ENCODE measurements at regions of chr14 and their contacts with region 1.

Region 1: GRCh38 chr14:61468063-61468825 is 146.9 kb downstream of the PRKCH start:
- DNase-seq: no peak
- ATAC-seq: no peak
- H3K4me3 ChIP-seq: no peak overlapping the region
- H3K4me3 Mint-ChIP-seq: no peak overlapping the region
- H3K27ac ChIP-seq: no peak overlapping the region
- H3K27ac Mint-ChIP-seq: no peak overlapping the region
- H3K4me1 ChIP-seq: peaks cover 25 to 30% of the 10 kb centered on the region in 2 donors
- H3K4me1 Mint-ChIP-seq: peaks cover 44% of the 10 kb centered on the region
- H3K27me3 ChIP-seq: no peaks in the 10 kb centered on the region
- H3K27me3 Mint-ChIP-seq: no peaks in the 10 kb centered on the region
- CTCF ChIP-seq: no peak

Region 2: GRCh38 chr14:59776468-59776867 is 1691.8 kb before region 1 on chr14:
- CTCF ChIA-PET with region 1: no interaction called
- POLR2A ChIA-PET with region 1: no interaction called
- intact Hi-C with region 1: no loop called
- DNase-seq: no peak
- ATAC-seq: no peak
- H3K4me3 ChIP-seq: no peak overlapping the region
- H3K4me3 Mint-ChIP-seq: no peak overlapping the region
- H3K27ac ChIP-seq: no peak overlapping the region
- H3K27ac Mint-ChIP-seq: no peak overlapping the region
- H3K4me1 ChIP-seq: no peaks in the 10 kb centered on the region
- H3K4me1 Mint-ChIP-seq: no peaks in the 10 kb centered on the region
- H3K27me3 ChIP-seq: peaks cover 0 to 4% (median 2%) of the 10 kb centered on the region in 4 experiments
- H3K27me3 Mint-ChIP-seq: peaks cover 3% of the 10 kb centered on the region
- CTCF ChIP-seq: no peak

Region 3: DNA sequence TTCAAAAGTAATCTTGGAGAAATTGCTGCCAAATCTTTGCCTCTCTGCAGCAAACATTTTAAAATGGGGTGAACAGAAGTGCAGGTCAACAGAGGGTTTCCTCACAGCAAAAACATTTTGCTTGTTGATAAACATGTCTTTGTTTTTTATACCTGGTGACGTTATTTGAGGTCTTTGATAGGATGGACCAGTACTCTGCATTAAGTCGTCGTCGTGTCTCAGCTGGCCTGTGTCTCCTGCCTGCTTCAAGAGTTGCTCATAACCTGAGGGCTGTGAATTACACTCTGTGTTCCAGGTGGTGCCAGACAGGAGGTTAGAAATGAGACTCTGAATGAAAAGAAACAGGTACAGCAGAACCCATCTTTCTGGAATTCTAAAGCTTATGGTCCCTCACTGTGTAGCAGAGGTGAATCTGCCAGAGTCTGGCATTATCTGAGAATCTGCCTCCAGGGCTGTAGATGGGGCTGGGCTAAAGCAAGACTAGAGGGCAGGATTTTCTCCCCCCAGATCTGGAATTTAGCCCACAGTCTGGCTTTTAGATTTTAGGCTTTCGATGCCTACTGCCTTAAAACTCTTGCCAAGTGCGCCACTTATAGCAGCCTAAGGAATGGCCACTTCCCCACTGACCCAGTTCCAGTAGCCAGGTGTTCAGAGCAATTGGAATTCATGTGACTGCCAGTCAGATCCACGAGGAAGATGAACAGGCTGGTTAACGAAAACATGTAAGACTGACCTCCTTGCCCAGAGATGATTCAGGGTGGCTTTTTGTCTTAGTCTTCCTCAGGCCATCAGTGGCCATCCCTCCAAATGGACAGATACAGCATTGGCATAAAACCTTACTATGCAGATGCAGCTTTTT is 14.3 kb after region 1 on chr14:
- CTCF ChIA-PET with region 1: interaction called, 28 read pairs
- POLR2A ChIA-PET with region 1: interaction called, 16 read pairs
- intact Hi-C with region 1: no loop called
- DNase-seq: no peak
- ATAC-seq: no peak
- H3K4me3 ChIP-seq: no peak overlapping the region
- H3K4me3 Mint-ChIP-seq: no peak overlapping the region
- H3K27ac ChIP-seq: no peak overlapping the region
- H3K27ac Mint-ChIP-seq: peak overlapping the region; percentile 20
- H3K4me1 ChIP-seq: peaks cover 31 to 40% of the 10 kb centered on the region in 2 donors
- H3K4me1 Mint-ChIP-seq: peaks cover 50% of the 10 kb centered on the region
- H3K27me3 ChIP-seq: no peaks in the 10 kb centered on the region
- H3K27me3 Mint-ChIP-seq: no peaks in the 10 kb centered on the region
- CTCF ChIP-seq: no peak

Measured in B cell (primary cell).